ENCODE measurements at regions of chr20 and their contacts with region 1.

Region 1: DNA sequence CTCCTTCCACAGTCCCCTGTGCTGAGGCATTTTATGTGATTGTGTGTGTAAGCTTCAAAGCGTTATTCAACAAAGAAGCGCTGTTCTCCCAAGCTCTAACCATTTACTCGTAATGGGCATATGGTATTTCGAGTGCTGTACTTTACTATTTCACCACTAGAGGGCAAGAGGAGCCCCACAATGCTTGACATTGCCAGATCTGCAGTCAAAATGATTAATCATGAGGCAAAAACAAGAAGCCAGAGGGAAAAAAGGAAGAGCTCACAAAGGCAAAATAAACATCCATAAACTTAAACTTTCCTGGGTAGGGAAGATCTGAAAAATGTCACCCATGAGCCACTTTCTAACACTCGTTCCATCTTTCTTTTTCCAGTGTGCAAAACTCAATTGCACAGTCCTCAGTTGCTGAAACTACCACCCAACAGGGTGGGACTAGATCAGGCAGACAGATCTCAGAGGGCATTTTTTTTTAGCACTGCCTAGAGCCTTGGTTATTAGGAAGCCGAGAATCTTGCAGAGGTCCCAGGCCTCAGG is 215.0 kb upstream of the PLCB4 start:
- DNase-seq: peak; percentile 70 to 80
- ATAC-seq: peak; percentile 88 to 97
- H3K4me3 ChIP-seq: no peak overlapping the region
- H3K27ac ChIP-seq: peak overlapping the region; percentile 45 to 63; a peak in 4 of 6 replicates
- H3K4me1 ChIP-seq: peaks cover 16% of the 10 kb centered on the region
- CTCF ChIP-seq: peak; percentile 95
- EP300 ChIP-seq: no peak
- POLR2A ChIP-seq: no peak
- RAD21 ChIP-seq: peak; percentile 94 to 97

Region 2: DNA sequence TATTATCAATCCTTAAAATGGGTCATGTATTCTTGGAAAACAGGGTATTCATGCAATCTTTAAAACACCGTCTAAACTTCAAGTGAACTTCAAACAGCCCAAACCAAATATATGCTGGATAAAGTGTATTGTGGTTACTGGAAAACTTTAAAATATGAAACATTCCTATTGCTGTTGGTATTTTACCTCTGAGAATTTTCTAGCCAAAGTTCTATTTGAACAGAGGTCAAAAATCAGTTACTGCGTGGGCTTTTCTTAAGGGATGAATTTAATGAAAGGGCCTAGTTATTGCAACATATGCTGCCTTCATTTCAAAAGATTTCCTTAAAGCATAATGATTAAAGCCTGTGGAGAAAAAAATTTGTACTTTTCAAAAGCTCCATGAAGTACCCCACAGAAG is 285.8 kb before region 1 on chr20:
- CTCF ChIA-PET with region 1: no interaction called
- POLR2A ChIA-PET with region 1: no interaction called
- DNase-seq: no peak
- ATAC-seq: no peak
- H3K4me3 ChIP-seq: no peak overlapping the region
- H3K27ac ChIP-seq: no peak overlapping the region
- H3K4me1 ChIP-seq: no peaks in the 10 kb centered on the region
- CTCF ChIP-seq: no peak
- EP300 ChIP-seq: no peak
- POLR2A ChIP-seq: no peak
- RAD21 ChIP-seq: no peak

Region 3: DNA sequence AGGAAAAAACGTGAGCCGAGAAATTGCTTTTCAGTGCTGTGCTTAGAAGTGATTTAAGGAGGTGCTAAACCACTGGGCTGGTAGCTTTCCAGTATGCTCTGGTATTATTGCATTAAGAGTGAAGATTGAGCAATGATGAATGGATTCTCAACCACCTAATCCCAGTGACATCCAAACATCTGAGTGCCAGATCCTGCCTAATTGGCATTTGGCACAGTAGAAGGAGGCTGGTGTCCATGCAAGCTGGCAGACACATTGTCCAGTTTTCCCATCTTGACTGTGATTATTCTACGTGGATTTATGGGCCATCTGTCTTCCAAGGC is 183.0 kb before region 1 on chr20:
- CTCF ChIA-PET with region 1: no interaction called
- POLR2A ChIA-PET with region 1: no interaction called
- DNase-seq: no peak
- ATAC-seq: no peak
- H3K4me3 ChIP-seq: no peak overlapping the region
- H3K27ac ChIP-seq: no peak overlapping the region
- H3K4me1 ChIP-seq: no peaks in the 10 kb centered on the region
- CTCF ChIP-seq: no peak
- EP300 ChIP-seq: no peak
- POLR2A ChIP-seq: no peak
- RAD21 ChIP-seq: no peak

Region 4: GRCh38 chr20:8756410-8756809 is 97.5 kb before region 1 on chr20:
- CTCF ChIA-PET with region 1: interaction called, 12 read pairs
- POLR2A ChIA-PET with region 1: no interaction called
- DNase-seq: peak; percentile 87 to 93
- ATAC-seq: peak; percentile 96
- H3K4me3 ChIP-seq: no peak overlapping the region
- H3K27ac ChIP-seq: peak overlapping the region; percentile 65 to 78
- H3K4me1 ChIP-seq: peaks cover 21% of the 10 kb centered on the region
- CTCF ChIP-seq: no peak
- EP300 ChIP-seq: 0 out of 5 replicates have a peak, but pooled peaks of 1 of the 2 experiments have one; percentile 9
- POLR2A ChIP-seq: no peak
- RAD21 ChIP-seq: no peak

Region 5: DNA sequence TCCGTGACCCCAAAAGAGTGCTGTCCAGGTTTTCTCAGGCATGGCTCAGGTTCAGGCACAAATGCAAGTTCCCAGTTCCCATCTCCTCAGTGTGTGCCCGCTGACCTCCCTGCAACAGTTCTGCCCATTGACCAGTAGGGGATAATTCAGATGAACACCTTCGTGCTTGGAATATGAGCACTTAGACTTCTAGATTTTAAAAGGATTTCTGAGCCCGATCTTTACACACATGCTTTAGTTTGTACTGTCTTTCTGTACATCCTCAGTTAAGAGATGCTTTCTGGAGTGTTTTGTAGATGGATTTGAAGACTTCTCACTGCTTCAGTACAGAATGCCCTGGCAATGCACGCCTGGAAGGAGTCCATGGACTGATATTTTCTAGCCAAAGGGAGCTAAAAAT is 24.6 kb before region 1 on chr20:
- CTCF ChIA-PET with region 1: interaction called, 10 read pairs
- POLR2A ChIA-PET with region 1: no interaction called
- DNase-seq: peak; percentile 21 to 31
- ATAC-seq: peak; percentile 71 to 90; a peak in 4 of 6 replicates
- H3K4me3 ChIP-seq: no peak overlapping the region
- H3K27ac ChIP-seq: no peak overlapping the region
- H3K4me1 ChIP-seq: no peaks in the 10 kb centered on the region
- CTCF ChIP-seq: 0 out of 3 replicates have a peak, but pooled peaks have one; percentile 14
- EP300 ChIP-seq: no peak
- POLR2A ChIP-seq: no peak
- RAD21 ChIP-seq: no peak

Region 6: DNA sequence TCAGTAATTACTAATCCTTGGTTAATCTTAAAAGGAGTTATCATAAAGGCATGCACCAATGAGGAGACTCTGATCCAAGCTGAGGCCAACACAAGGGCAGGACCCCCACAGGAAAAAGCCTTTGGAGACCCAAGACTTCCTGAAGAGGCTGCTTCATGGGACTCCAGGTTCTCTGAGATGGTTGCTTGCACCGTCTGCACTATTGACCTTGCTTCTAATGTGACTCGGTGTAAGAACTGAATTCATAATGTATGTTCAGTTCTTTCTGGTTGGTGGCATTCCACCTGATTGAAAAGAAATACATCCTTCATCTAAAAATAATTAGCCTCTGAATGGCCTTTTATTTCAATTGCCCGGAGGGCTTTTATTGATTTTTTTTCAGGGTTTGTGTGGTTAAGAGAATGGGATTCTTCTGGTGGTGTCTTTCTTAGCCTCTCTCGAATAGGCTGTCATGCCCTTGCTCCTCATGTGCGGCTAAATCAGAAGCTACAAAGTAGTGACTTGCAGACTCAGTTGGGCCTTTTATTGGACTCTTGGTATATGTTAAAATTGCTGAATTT is 13.4 kb after region 1 on chr20:
- CTCF ChIA-PET with region 1: interaction called, 19 read pairs
- POLR2A ChIA-PET with region 1: no interaction called
- DNase-seq: no peak
- ATAC-seq: no peak
- H3K4me3 ChIP-seq: no peak overlapping the region
- H3K27ac ChIP-seq: no peak overlapping the region
- H3K4me1 ChIP-seq: 0 out of 3 replicates have a peak, but pooled peaks cover 4% of the 10 kb centered on the region
- CTCF ChIP-seq: no peak
- EP300 ChIP-seq: no peak
- POLR2A ChIP-seq: no peak
- RAD21 ChIP-seq: no peak

Region 7: DNA sequence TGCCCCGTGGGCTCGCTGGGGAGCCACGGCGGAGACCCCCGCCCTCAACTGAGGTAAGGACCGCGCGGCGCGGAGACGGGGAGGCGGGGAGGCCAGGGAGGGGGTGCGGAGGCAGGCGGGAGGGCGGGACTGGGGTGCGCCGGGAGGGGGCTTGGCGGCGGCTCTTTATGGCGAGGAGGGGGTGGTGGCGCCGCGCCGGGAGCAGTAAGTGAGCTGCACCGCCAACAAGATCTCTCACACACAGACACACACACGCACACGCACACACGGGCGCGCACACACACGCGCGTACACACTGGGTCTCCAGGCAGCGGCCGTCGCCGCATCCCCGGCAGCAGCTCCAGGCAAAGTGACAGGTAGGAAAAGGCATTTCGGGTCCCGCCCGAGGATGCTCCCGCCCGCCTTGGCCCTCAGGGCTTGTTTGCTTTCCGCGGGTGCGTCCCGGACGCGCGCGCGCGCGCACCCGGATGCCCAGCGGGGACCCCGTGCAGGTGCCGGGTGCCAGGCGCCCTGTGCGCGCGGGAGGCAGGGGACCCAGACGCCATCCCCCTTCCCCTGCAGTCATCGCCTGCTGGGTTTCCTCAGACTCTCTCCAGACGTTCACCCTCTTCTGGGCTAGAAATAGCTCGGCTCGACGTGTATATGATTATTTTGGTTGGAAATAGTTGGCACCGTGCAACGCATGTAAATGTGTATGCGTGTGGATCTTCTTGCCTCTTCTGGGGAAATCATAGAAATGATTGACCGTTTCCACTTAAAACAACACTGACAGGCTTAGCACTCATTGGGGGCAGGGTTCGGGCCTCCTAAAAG is 215.2 kb after region 1 on chr20 and contains the start of gene PLCB4:
- CTCF ChIA-PET with region 1: interaction called, 42 read pairs
- POLR2A ChIA-PET with region 1: interaction called, 3 read pairs
- DNase-seq: peak; percentile 63 to 88
- ATAC-seq: peak; percentile 54 to 65
- H3K4me3 ChIP-seq: peak within 1 kb of the TSS; percentile 85
- H3K27ac ChIP-seq: peak within 1 kb of the TSS; percentile 90 to 97
- H3K4me1 ChIP-seq: peaks cover 61% of the 10 kb centered on the region
- CTCF ChIP-seq: no peak
- EP300 ChIP-seq: 0 out of 5 replicates have a peak, but pooled peaks of 1 of the 2 experiments have one; percentile 37
- POLR2A ChIP-seq: 0 out of 2 replicates have a peak, but pooled peaks have one; percentile 19
- RAD21 ChIP-seq: peak in 1 of 2 experiments; percentile 13; a peak in 3 of 5 replicates
- polyA plus RNA-seq, gene PLCB4: 24.0 and 32.1 TPM in 2 replicates

Region 8: GRCh38 chr20:9353180-9353915 is 499.5 kb after region 1 on chr20:
- CTCF ChIA-PET with region 1: interaction called, 71 read pairs
- POLR2A ChIA-PET with region 1: no interaction called
- DNase-seq: no peak
- ATAC-seq: peak in 1 of 2 experiments; percentile 51; a peak in 1 of 6 replicates
- H3K4me3 ChIP-seq: no peak overlapping the region
- H3K27ac ChIP-seq: peak overlapping the region in 1 of 2 experiments; percentile 22; a peak in 1 of 6 replicates
- H3K4me1 ChIP-seq: peaks cover 12% of the 10 kb centered on the region; the same call in 2 of the 3 replicates
- CTCF ChIP-seq: no peak; the same call in 1 of the 3 replicates
- EP300 ChIP-seq: no peak
- POLR2A ChIP-seq: no peak
- RAD21 ChIP-seq: peak; percentile 33 to 45; a peak in 4 of 5 replicates

Region 9: DNA sequence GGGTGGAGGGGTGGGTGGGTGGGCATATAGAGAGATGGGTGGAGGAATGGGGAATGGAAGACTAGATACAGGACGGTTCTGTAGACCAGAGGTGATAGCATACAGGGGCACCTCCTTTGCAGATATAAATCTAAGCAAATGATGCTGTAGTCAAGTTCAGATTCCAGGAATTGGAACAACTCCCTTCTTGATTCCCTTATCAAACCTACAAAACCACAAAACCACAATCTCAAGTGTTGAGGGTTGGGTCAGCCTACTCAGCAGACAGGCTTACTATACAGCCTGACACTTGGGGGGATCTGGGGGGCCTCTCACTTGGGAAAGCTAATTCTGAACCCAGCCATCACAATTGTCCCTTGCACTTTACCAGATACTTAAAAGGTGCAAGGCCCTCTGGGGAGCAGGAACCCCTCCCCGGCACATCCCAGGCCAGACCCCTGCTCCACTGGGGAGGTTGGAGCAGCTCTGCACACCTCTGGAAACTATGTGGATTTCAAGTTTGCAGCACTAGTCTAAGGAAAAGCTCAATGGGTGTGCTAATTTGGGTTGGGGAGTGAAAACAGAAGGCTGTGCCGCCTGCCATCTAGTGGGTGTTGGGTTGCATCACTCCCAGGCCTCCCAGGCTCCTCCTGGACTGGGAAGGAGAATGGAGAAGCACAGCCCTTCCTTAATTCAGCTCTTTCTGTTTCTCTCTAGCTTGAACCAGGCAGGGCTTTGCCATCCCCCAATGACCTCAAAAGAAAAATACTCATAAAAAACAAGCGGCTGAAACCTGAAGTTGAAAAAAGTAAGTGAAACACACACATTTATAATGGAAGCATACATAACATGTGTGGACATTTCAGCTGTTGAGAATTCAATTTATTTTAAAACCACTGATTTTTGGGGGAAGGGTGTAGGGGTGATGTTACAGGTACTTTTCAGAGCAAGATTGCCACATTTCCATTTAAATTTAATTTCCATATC is 539.3 kb after region 1 on chr20:
- CTCF ChIA-PET with region 1: interaction called, 13 read pairs
- POLR2A ChIA-PET with region 1: no interaction called
- DNase-seq: peak; percentile 62 to 73
- ATAC-seq: peak; percentile 96 to 98
- H3K4me3 ChIP-seq: no peak overlapping the region
- H3K27ac ChIP-seq: 0 out of 6 replicates have a peak overlapping the region, but pooled peaks of 1 of the 2 experiments have one; percentile 26
- H3K4me1 ChIP-seq: 0 out of 3 replicates have a peak, but pooled peaks cover 4% of the 10 kb centered on the region
- CTCF ChIP-seq: peak; percentile 86
- EP300 ChIP-seq: no peak
- POLR2A ChIP-seq: no peak
- RAD21 ChIP-seq: peak; percentile 85 to 91